ENCODE measurements at regions of chr12 and their contacts with region 1.

Region 1: GRCh38 chr12:31238764-31239387 is 87.1 kb downstream of the SINHCAF start:
- DNase-seq: peak; percentile 51 to 76
- ATAC-seq: peak; percentile 70

Region 2: GRCh38 chr12:30643366-30643765 is 595.5 kb before region 1 on chr12:
- intact Hi-C with region 1: no loop called
- DNase-seq: no peak
- ATAC-seq: no peak

Region 3: GRCh38 chr12:30840715-30841114 is 398.2 kb before region 1 on chr12:
- intact Hi-C with region 1: loop called in 1 of 2 experiments (anchors 5 kb)
- DNase-seq: no peak
- ATAC-seq: no peak

Measured in left colon (tissue), 2 donors.